ENCODE measurements at regions of chrX and their contacts with region 1.

Region 1: DNA sequence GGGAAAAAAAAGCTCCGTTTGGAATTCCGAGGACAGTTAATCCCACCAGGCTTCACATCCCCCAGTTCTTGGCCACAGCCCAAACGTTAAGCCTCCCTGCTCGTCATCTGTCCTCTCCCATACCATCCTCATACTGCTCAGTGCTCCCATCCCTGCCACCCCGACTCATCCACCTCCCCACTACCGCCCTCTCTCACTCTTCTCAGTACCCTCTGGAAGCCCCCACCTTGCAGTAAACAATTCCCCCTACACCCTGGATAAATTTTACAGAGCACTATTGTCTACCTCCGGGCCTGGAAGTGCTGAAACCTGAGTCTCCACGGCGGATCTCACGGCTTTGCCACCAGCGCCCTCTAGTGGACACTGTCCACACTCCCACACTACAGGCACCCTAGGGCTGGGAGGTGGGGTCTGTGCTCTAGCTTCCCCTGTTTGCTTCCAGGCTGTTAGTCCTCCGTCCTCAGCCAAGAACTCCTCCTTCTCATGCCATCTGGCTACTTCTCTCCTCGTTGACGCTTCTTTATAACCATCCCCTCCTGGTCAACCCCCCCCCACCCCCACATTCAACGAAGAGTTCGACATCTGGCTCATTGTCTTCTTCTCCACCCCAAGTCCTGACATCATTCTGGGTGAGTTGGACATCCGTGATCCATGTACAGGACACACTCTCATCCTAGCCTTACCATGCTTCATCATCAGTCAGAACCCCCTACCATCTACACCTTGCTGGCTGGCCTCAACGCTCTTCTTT is 54.5 kb downstream of the RTL9 start:
- H3K4me3 ChIP-seq: no peak overlapping the region; the same call in 1 of the 2 replicates
- H3K27ac ChIP-seq: no peak overlapping the region
- H3K4me1 ChIP-seq: no peaks in the 10 kb centered on the region
- CTCF ChIP-seq: peak; percentile 90

Region 2: DNA sequence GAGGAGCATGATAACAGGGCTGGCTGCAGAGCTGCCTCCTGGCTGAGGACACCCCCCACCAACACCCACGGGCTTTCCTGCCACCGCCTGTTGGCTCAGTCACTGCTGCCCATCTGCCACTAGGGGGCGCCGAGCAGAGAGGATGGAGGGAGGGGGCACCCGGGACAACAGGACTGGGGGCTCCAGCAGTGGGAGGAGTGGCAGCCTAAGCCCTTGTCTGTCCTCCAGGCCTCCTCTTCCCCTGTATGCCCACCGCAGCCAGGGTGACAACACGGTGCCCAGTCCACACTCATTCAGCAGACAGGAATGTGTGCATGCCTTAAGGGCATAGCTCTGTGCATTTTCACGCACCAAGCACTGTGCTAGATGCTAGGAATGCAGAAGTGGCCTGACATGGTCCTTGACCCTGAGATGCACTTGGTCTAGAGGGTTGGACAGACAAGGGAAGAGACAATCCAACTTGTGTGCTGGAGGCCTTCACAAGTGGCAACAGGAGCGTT is 245.1 kb before region 1 on chrX:
- CTCF ChIA-PET with region 1: interaction called, 576 read pairs
- POLR2A ChIA-PET with region 1: no interaction called
- H3K4me3 ChIP-seq: no peak overlapping the region
- H3K27ac ChIP-seq: no peak overlapping the region
- H3K4me1 ChIP-seq: no peaks in the 10 kb centered on the region
- CTCF ChIP-seq: peak; percentile 60

Region 3: DNA sequence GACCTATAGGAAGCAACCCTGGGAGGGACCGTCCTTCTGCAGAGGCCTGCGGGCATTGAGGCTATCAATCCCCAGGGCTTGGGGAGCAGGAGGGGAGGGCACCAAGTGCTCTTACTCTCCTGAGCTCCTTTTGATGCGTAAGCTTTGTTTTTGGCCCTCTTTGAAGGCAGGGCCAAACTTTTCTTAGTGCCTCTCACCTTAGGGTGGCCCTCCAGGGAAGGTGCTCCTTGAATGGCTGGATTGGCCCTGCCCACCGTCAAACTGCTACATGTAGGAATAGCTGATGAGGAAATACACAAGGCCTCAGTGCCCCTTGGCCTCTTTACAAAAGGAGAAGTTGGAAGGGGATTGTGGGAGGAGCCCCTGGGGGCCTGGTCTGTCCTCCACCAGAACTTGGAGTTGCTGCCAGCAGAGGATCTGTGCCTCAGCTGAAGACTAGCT is 238.1 kb before region 1 on chrX:
- CTCF ChIA-PET with region 1: interaction called, 576 read pairs
- POLR2A ChIA-PET with region 1: no interaction called
- H3K4me3 ChIP-seq: no peak overlapping the region
- H3K27ac ChIP-seq: no peak overlapping the region
- H3K4me1 ChIP-seq: no peaks in the 10 kb centered on the region
- CTCF ChIP-seq: no peak

Region 4: DNA sequence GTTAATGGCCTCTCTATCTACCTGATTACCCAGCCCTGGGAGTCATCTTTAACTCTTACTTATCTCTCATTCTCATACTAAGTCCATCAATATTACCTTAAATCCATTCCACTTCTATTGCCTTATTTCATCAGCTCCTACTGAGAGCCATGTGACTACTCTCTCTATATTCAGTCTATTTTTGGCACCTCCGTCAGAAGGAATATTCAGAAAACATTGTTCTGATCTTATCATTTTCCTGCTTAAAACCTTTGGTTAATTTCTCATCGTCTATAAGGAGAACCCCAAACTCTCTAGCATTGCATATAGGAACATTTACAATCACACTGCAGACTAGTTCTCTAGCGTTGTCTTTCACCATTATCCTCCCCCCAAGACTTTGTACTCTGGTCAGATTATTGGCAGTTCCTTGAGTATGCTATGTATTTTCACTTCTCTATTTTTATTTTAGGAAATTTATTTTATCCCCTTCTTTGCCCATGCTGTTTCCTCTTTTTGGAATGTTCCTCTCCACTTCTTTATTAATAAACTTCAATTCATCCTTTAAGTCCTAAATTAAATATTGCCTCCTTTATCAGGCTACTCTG is 81.6 kb before region 1 on chrX:
- CTCF ChIA-PET with region 1: no interaction called
- POLR2A ChIA-PET with region 1: no interaction called
- H3K4me3 ChIP-seq: no peak overlapping the region
- H3K27ac ChIP-seq: no peak overlapping the region
- H3K4me1 ChIP-seq: no peaks in the 10 kb centered on the region
- CTCF ChIP-seq: no peak

Region 5: DNA sequence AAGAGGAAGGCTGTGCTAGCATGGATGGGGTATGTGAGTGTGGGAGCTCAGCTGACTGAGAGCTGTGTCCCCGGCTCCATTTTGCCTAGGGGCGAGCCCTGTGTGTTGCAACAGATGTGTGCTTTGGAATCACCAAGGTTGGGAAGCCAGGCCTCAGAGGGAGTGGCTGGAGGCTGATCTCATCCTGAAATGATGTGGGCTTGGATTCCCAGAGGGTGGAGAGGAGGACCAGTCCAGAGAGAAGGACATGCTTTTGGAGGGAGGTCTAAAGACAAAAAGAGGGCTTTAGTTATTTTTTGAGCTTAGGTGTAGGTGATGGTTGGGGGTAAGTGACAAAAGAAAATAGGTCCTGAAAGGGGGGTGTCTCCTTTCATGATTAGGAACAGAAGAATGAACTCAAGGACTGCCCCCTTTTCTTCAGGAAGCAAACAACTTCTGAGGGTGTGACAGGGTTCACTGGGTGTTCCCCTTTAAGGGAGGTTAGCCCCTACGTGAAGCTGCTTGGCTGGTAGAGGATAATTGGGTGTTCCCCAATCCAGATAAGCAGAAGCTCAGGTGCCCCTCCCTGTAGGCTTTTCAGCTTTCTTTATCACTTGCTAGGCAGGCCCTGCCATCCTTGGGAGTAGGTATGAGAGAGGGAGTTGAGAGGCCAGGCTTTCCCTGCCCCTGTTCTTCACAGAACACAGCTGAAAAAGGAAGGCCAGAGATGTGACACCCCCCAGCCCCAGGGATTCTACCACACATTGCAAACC is 10.5 kb before region 1 on chrX:
- CTCF ChIA-PET with region 1: interaction called, 84 read pairs
- POLR2A ChIA-PET with region 1: no interaction called
- H3K4me3 ChIP-seq: no peak overlapping the region
- H3K27ac ChIP-seq: no peak overlapping the region
- H3K4me1 ChIP-seq: no peaks in the 10 kb centered on the region
- CTCF ChIP-seq: no peak

Region 6: GRCh38 chrX:110425222-110426154 is 12.3 kb after region 1 on chrX:
- CTCF ChIA-PET with region 1: interaction called, 84 read pairs
- POLR2A ChIA-PET with region 1: interaction called, 3 read pairs
- H3K4me3 ChIP-seq: no peak overlapping the region
- H3K27ac ChIP-seq: no peak overlapping the region
- H3K4me1 ChIP-seq: no peaks in the 10 kb centered on the region
- CTCF ChIP-seq: no peak

Region 7: DNA sequence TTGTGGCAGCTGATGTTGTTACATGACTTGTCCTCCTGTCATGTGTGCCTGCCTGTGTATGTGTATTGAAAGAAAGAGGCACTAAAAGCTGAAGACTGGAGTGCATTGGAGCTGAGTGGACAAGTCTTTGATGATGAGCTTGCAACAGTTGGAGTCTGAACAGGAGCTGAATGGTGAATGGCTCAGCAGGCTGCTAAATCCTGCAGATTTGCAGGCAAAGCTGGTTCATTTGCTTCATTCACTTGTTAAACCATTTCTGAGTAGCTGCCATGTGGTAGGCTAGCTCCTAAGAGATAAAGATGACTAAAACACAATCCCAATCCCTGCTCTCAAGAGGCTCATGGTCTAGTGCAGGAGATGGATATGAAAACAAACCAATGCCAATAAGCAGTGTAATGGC is 165.1 kb after region 1 on chrX:
- CTCF ChIA-PET with region 1: no interaction called
- POLR2A ChIA-PET with region 1: no interaction called
- H3K4me3 ChIP-seq: no peak overlapping the region
- H3K27ac ChIP-seq: no peak overlapping the region
- H3K4me1 ChIP-seq: no peaks in the 10 kb centered on the region
- CTCF ChIP-seq: no peak

Measured in HEK293 (cell line).